ENCODE measurements at regions of chr15 and their contacts with region 1.

Region 1: DNA sequence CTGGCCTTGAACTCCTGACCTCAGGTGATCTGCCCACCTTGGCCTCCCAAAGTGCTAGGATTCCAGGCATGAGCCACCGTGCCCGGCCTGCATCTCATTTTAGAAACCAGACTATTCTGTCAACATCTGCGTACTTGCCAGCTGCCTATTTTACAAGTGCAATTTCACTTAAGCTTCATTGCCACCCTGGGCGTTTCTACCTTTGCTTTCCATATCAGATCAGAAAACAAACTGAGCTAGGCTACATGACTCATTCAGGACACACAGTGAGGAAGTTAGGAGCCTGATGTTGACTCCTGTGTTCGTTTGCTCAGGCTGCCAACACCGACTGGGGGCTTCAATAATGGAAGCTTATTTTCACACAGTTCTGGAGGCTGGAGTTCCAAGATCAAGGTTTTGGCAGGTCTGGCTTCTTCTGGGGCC is 42.3 kb upstream of the KLHL25 start:
- DNase-seq: no peak
- ATAC-seq: no peak

Region 2: DNA sequence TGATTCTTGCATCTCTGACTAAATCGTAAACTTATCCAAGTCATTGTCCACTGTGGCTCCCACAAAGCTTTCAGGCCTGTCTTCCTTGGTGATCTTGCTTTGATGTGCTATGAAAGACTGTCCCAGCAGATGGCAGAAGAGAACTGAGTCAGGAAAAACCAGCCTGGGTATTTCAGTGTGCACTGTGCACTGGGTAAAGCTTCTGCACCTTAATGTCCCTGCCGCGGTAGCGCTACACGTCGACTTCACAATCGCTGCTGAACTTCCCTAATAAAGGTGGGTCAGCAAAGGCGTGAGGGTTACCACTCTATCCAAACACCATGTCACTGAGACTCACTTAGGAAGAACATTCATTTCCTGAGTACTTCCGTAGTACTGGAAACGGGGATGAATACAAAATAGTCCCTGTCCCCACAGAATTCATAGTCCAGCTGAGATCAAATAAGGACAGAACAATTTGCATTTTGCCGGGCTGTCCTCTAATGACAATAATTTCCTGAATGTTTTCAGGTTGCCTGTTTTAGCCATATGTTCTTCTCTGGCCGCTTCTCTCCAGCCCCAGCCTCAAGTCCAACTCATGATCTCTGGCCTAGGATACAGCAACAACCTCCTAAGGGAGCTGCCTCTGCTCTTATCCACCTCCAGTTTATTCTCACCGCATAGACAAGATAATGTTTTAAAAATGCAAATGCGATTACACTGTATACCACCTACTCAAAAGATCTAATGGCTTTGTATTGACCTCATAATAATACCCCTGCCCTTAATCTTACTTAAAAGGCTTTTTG is 540.2 kb before region 1 on chr15:
- intact Hi-C with region 1: loop called in 1 of 2 experiments (anchors 5 kb)
- DNase-seq: peak; percentile 52
- ATAC-seq: peak; percentile 93 to 96

Region 3: GRCh38 chr15:85667491-85668424 is 169.3 kb before region 1 on chr15:
- intact Hi-C with region 1: no loop called
- DNase-seq: peak; percentile 58
- ATAC-seq: peak; percentile 93 to 94

Region 4: DNA sequence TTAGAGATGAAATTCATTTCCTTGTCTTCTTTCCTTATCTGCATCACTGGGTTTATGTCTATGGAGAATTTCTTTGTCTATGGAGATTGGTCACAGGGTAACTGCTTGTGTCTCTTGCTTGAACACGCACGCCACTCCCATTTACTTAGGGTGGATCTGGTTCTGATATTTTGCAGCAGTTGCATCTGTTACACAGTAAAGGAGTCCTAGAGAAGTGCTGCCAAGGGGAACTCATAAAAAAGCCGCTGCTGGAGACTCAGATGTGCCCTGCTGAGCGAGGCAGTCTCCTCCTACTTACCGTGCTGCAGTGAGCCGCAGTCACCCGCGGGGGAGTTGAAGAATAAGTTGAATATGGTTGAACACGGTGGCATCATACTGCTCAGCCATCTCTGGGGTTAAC is 62.9 kb after region 1 on chr15:
- intact Hi-C with region 1: no loop called
- DNase-seq: no peak
- ATAC-seq: no peak